ENCODE measurements at regions of chr12 and their contacts with region 1.

Region 1: DNA sequence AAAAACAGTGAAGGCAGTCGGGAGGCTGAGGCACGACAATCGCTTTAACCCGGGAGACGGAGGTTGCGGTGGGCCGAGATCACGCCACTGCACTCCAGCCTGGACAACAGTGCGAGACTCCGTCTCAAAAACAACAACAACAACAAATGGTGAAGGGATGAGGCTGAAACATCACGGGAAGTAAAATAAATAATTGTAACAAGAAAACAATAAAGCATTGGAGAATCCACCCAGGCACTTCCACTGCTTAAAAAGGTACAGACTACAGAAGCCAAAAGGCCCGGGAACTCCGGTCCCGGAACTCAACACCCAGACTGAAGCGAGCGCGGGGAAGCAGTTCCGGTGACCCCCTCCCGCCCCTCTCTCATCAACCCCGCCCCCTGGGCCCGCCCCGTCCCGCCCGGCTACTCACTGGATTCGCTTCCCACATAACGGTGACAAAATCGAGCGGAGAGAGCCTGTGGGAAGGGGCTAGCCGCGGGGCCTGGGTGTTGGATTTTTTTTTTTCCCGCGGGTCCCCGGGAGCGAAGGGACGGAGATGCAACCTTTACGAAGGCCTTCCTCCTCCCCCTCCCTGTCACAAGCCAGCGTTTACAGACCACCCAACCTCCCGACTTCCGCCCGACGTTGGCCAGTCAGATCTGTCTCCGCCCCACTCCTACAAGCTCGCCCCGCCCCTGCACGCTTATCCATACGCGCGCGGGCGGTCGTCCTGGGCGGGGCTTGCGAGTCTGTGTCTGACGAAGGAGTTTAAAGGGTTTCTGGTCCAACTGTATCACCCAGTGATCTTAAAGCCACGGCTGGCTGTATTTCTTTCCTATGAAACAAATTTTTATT is at the start of gene PARP11:
- DNase-seq: peak; percentile 91
- ATAC-seq: peak; percentile 98
- H3K4me3 Mint-ChIP-seq: peak within 1 kb of the TSS; percentile 91
- H3K27ac Mint-ChIP-seq: peak within 1 kb of the TSS; percentile 93
- H3K4me1 Mint-ChIP-seq: peaks cover 48% of the 10 kb centered on the region
- H3K27me3 Mint-ChIP-seq: peaks cover 3% of the 10 kb centered on the region
- CTCF ChIP-seq: no peak
- total RNA-seq, gene PARP11: 21.4 and 27.2 TPM in 2 replicates

Region 2: DNA sequence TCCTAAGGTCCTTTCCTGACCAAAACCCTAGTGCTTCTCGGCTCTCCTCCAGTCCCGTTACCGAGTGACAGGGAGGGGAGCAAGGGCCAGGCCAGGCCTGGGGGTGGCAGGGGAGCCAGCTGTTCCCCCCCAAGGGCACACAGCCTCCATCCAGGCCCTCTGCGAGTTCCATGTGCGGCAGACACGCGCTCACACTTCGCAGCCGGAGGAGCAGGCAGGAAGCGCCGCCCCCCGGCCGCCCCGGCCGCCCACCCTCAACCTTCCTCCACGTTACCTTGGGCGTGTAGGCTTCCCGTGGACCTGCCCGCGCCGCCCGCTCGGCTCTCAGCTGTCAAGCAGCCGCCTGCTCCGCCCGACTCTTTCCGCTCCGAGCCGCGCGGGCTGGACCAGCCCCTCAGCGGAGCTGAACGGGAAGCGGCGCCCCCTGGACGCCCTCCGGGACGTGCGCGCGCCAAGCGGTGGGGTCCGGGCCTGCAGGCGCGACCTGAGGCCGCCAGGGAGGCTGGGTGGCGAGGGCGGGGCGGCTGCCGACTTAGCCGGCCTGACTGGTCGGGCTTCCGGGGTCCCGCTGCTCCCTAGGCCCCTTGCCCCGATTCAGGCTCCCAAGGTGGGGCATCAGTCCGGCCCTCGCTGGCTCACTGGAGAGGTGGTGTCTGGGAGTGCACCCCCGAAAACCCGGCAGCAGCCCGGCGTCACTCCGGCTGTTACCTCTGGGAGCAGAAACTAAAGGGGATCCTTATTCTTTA is 120.1 kb before region 1 on chr12 and contains the start of gene CRACR2A:
- CTCF ChIA-PET with region 1: no interaction called
- POLR2A ChIA-PET with region 1: interaction called, 3 read pairs
- intact Hi-C with region 1: loop called (anchors 1 kb)
- DNase-seq: peak; percentile 85
- ATAC-seq: peak; percentile 87
- H3K4me3 Mint-ChIP-seq: peak within 1 kb of the TSS; percentile 88
- H3K27ac Mint-ChIP-seq: peak within 1 kb of the TSS; percentile 93
- H3K4me1 Mint-ChIP-seq: peaks cover 25% of the 10 kb centered on the region
- H3K27me3 Mint-ChIP-seq: no peaks in the 10 kb centered on the region
- CTCF ChIP-seq: no peak
- total RNA-seq, gene CRACR2A: 22.7 and 25.8 TPM in 2 replicates

Region 3: DNA sequence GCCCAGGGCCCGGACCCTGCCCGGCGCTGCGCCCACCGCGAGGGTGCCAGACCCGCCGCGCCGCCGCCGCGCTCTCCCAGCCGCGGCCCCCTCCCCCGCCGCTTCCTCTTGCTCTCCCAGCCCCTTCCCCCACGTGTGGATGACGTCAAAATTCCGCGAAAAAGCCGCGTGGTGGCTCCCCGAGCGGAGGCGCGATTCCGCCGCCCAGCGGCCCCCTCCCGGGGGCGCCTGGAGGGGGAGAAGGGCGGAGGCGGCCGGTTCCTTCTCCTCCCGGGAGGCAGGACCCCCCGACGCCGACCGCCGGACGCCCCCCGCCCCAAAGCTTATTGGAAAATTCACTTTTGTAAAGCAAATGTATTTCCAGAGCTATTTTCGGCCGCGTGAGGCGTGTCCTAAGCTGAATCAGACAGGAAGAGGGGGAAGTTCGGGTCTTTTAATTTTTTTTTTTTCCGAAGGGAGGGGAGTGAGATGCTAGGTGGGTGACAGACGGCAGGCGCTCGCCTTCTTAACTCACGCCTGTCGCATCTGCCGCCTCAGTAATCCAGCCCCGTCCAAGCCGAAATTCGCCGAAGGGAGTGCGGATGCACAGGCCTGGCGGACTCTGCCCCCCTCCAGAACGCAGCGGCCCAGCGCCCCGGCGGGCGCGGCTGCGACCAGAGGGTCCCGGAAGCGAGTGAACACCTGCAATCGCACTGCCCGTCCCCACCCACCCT is 396.4 kb after region 1 on chr12:
- CTCF ChIA-PET with region 1: interaction called, 3 read pairs
- POLR2A ChIA-PET with region 1: interaction called, 18 read pairs
- intact Hi-C with region 1: loop called (anchors 1 kb)
- DNase-seq: peak; percentile 84
- ATAC-seq: peak; percentile 30
- H3K4me3 Mint-ChIP-seq: peak overlapping the region; percentile 91
- H3K27ac Mint-ChIP-seq: peak overlapping the region; percentile 95
- H3K4me1 Mint-ChIP-seq: peaks cover 33% of the 10 kb centered on the region
- H3K27me3 Mint-ChIP-seq: no peaks in the 10 kb centered on the region
- CTCF ChIP-seq: no peak

Region 4: DNA sequence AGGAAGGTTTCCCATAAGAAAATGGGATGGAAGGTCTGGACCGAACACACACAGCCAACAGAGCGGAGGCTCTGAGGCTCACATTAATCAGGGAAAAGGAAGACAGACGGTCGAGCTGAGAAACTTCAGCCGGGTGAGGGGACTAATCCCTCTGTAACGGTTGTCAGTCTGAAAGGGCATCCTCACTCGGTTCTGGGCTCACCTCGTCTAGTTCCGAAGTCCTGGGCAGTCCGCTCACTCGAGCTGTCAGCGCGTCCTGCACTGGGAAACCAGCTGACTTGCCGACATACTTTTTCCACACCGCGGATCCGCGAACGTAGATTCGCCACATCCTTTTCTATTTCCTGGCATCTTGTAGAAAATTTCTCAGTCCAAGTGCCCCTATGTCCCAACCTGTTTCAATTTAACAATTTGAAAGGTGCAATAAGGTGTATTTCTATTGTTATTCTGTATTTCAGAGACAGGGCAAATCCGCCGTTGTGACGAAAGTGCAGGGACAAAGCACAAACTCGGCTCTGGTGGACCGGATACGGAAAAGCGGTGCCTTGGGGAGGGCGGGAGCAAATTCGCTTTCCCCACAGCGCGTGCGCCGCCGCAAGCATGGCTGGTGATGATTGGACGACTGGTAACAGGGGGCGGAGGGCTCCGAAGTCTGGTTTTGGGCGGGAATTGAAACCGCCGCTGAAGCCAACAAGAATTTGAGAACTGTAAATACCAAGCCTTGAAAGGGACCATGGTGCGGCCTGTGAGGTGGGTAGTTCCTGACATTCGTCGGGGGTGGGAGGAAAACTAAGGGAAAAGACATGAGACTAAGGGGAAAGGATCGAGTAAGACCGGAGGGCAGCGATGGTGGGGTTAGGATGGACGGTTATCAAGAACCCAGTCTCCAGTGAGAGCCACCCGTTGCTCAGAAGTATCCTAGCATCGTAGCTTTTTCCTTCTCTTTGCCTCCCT is 665.5 kb after region 1 on chr12 and contains the start of gene RAD51AP1:
- CTCF ChIA-PET with region 1: no interaction called
- POLR2A ChIA-PET with region 1: interaction called, 5 read pairs
- intact Hi-C with region 1: loop called (anchors 1 kb)
- DNase-seq: peak; percentile 86
- ATAC-seq: peak; percentile 98
- H3K4me3 Mint-ChIP-seq: peak within 1 kb of the TSS; percentile 91
- H3K27ac Mint-ChIP-seq: peak within 1 kb of the TSS; percentile 99
- H3K4me1 Mint-ChIP-seq: peaks cover 31% of the 10 kb centered on the region
- H3K27me3 Mint-ChIP-seq: no peaks in the 10 kb centered on the region
- CTCF ChIP-seq: no peak
- total RNA-seq, gene RAD51AP1: 5.6 and 5.9 TPM in 2 replicates

Region 5: DNA sequence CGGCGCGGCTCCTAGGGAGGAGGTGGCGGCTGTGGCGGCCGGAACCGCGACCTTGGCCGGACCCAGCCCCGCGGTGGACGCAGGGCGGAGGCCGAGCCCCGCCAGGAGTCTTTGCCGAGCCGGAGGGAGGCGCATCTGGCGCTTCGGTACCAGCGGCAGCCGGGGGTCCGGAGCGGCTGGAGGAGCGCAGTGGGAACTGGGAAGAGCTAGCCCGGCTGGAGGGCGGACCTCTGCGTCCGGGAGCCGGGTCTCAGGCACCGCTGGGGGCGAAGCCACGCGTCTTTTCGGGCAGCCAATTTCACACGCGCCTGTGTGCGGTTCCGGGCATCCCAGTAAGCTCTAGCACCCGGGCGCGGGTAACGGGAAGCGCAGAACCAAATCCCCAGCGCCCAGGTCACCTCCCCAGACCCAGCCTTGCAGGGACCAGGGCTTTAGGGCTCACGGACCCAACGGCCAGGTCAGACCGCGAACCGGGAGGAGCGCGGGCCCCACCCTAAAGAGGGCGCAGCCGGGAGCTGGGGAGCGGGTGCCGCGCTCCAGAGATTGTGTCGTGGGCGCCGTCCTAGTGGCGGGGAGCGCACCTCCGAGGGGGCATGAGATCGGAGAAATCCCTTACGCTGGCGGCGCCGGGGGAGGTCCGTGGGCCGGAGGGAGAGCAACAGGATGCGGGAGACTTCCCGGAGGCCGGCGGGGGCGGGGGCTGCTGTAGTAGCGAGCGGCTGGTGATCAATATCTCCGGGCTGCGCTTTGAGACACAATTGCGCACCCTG is 936.6 kb after region 1 on chr12:
- CTCF ChIA-PET with region 1: no interaction called
- POLR2A ChIA-PET with region 1: no interaction called
- intact Hi-C with region 1: loop called (anchors 10 kb)
- DNase-seq: no peak
- ATAC-seq: no peak
- H3K4me3 Mint-ChIP-seq: peak overlapping the region; percentile 75
- H3K27ac Mint-ChIP-seq: no peak overlapping the region
- H3K4me1 Mint-ChIP-seq: peaks cover 36% of the 10 kb centered on the region
- H3K27me3 Mint-ChIP-seq: peaks cover 28% of the 10 kb centered on the region
- CTCF ChIP-seq: no peak